ENCODE measurements at regions of chr18 and their contacts with region 1.

Region 1: DNA sequence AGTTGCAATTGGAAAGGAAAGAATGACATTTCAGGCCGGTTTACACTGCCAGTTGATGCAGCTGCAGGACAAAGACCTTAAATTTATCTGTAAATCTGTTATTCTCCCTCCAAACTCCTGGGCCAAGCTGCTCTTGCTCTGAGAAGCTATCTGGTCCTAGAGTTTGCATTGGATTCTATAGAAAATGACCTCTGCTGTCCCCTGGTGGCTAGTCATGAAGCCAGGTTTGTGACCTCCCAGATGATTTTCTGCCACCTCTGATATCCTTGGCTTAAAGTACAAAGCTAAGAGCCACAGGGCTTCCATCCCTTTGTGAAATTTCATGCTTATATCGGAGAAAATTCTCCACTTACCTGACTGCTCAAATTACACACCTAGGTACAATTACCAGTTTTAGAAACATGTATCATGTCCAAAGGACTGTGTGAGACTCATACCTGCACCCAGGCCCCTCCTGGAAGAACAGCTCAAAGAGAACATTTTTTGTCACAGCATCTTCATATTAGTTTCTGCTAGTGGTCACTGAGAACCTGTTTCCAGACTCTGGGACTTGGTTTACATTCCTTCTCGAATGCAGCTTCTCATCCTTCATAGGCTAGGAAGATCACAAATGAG is 28.9 kb upstream of the IER3IP1 start:
- DNase-seq: peak in 1 of 3 donors; percentile 49
- ATAC-seq: peak in 1 of 2 donors; percentile 42
- H3K4me3 ChIP-seq: no peak overlapping the region
- H3K27ac ChIP-seq: no peak overlapping the region
- H3K4me1 ChIP-seq: no peaks in the 10 kb centered on the region
- H3K27me3 ChIP-seq: no peaks in the 10 kb centered on the region

Region 2: GRCh38 chr18:47149457-47150028 is 55.5 kb before region 1 on chr18:
- intact Hi-C with region 1: loop called in 1 of 4 experiments (anchors 10 kb)
- DNase-seq: peak in 1 of 3 donors; percentile 38
- ATAC-seq: peak in 1 of 2 donors; percentile 10
- H3K4me3 ChIP-seq: peak overlapping the region; percentile 72
- H3K27ac ChIP-seq: peak overlapping the region; percentile 80
- H3K4me1 ChIP-seq: peaks cover 2% of the 10 kb centered on the region
- H3K27me3 ChIP-seq: no peaks in the 10 kb centered on the region

Measured in right cardiac atrium (tissue), 5 donors.